ENCODE measurements at regions of chr12 and their contacts with region 1.

Region 1: DNA sequence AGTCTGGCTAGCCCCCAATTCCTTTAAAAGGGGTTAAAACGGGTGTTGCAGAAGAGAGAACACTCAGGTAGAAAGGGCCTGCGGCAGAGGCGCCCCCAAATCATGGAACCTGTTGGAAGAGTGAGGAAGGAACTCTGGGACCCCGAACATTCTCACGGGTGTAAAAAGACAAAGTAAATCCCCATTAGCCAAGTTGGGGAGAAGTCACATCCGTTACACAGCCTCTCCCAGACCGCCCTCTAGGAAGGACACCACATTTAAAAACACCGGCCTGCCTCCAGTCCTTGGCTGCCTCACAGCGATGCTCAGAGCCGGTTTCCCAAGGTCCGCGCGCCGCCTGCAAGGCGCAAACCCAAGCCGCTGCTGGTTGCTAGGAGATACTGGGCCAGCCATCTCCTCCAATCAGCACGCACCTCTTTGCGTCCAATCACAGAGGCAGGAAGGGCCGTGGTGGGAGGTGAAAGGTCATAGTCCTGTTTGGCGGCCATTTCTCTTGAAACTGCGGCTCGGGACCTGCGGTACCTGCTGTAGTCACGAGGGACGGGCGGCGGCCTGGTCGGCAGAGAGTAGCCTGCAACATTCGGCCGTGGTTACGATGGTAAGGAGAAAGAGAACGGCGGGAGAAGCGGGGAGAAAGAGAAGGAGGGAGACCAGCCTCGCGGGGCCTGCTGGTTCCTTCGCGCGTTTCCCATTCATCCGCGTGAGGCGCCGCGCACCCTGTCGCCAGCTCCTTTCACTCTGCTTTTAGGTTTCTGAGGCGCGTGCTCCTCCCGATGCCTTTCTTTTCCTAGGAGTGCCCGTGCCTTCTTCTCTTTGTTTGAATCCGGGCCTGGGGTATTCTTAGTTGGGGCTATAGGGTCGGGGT is at the start of gene SNRPF:
- DNase-seq: peak; percentile 94 to 96 (median 96)
- H3K4me3 ChIP-seq: peak within 1 kb of the TSS; percentile 68 to 88 (median 73)
- H3K4me3 Mint-ChIP-seq: no peak within 1 kb of the TSS
- H3K27ac ChIP-seq: peak within 1 kb of the TSS; percentile 81 to 88
- H3K27ac Mint-ChIP-seq: peak within 1 kb of the TSS in 1 of 7 donors; percentile 11
- H3K4me1 ChIP-seq: peaks cover 23 to 28% of the 10 kb centered on the region in 2 donors
- H3K4me1 Mint-ChIP-seq: no peaks in the 10 kb centered on the region
- H3K27me3 ChIP-seq: peaks cover 23 to 38% of the 10 kb centered on the region in 2 donors
- H3K27me3 Mint-ChIP-seq: peaks cover 19 to 25% (median 23%) of the 10 kb centered on the region in 3 donors
- CTCF ChIP-seq: no peak
- polyA plus RNA-seq, gene SNRPF: 9.0 to 28.5 (median 23.5) TPM

Region 2: GRCh38 chr12:95942524-95943329 is 84.0 kb after region 1 on chr12 and contains the start of gene CCDC38:
- intact Hi-C with region 1: loop called in 1 of 2 experiments (anchors 5 kb)
- DNase-seq: peak; percentile 57 to 72 (median 70)
- H3K4me3 ChIP-seq: peak within 1 kb of the TSS; percentile 58 to 97 (median 78)
- H3K4me3 Mint-ChIP-seq: peak within 1 kb of the TSS; percentile 88 to 96
- H3K27ac ChIP-seq: peak within 1 kb of the TSS; percentile 10 to 77
- H3K27ac Mint-ChIP-seq: peak within 1 kb of the TSS; percentile 50 to 90 (median 80)
- H3K4me1 ChIP-seq: peaks cover 12 to 15% of the 10 kb centered on the region in 2 donors
- H3K4me1 Mint-ChIP-seq: peaks cover 11% of the 10 kb centered on the region
- H3K27me3 ChIP-seq: no peaks in the 10 kb centered on the region
- H3K27me3 Mint-ChIP-seq: peaks cover 0 to 4% (median 2%) of the 10 kb centered on the region in 3 donors
- CTCF ChIP-seq: no peak
- polyA plus RNA-seq, gene CCDC38: not detected